BJ (cell line): ENCODE measurements at regions of chr9 and their contacts with region 1.

Region 1: GRCh38 chr9:35161713-35162604 is at the start of gene UNC13B:
- DNase-seq: peak; percentile 62
- H3K4me3 ChIP-seq: peak within 1 kb of the TSS; percentile 85
- H3K27me3 ChIP-seq: no peaks in the 10 kb centered on the region
- CTCF ChIP-seq: peak; percentile 42
- polyA plus RNA-seq, gene UNC13B: 13.2 and 13.3 TPM in 2 replicates

Region 2: DNA sequence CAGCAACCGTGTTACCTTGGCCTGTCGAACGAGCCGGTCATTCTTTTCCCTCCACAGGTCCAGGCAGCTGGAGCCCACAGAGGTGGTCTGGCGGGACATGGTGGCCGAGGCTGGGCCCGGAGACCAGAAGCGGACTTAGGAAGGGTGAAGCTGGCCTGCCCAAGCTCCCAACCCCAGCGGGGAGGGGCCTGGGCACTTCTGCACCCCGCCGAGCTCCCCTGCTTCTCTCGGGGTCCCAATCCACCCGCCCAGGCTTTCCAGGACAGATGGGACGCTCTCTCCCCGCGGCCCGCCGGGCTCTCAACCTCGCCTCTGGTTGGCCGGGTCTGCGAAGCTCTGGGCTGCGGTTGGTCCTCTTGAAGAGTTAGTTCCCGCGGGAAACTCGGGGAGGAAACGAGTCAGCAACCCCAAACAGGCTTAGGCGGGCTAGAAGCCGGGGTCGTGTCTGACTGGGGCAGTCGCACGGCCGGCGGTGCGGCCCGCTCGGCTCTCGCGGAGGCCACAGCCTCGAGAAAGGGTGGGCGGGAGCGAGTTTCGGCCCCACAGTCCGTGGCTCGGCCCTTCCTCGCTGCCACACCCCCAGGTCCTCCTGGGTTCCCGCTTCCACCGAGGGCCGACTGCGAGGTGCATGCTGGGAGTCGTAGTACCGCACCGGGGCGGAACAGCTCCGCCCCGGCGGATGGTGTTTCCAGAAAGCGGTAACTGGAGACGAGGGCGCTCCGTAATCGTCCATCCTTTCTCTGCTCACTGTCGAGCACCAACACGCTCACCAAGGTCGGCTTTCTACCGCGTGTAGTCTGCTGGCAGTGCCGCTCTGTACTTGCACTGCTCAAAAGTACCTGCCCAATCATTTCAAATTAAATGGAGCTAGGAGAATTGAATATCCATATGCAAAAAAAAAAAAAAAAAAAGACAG is 82.3 kb before region 1 on chr9 and contains the start of gene FANCG:
- CTCF ChIA-PET with region 1: no interaction called
- POLR2A ChIA-PET with region 1: no interaction called
- DNase-seq: peak; percentile 70
- H3K4me3 ChIP-seq: peak within 1 kb of the TSS; percentile 65
- H3K27me3 ChIP-seq: no peaks in the 10 kb centered on the region
- CTCF ChIP-seq: no peak
- polyA plus RNA-seq, gene FANCG: 11.9 and 13.6 TPM in 2 replicates

Region 3: GRCh38 chr9:35172878-35173277 is 10.9 kb after region 1 on chr9:
- CTCF ChIA-PET with region 1: interaction called, 3 read pairs
- POLR2A ChIA-PET with region 1: interaction called, 11 read pairs
- DNase-seq: no peak
- H3K4me3 ChIP-seq: no peak overlapping the region
- H3K27me3 ChIP-seq: no peaks in the 10 kb centered on the region
- CTCF ChIP-seq: no peak